Dorsolateral prefrontal cortex (tissue), 120 donors: ENCODE measurements at regions of chr1 and their contacts with region 1.

Region 1: GRCh38 chr1:9292361-9293240 is at the start of gene SPSB1:
- DNase-seq: peak; percentile 19 to 81 (median 64)
- H3K4me3 ChIP-seq: peak within 1 kb of the TSS; percentile 63 to 95 (median 86)
- H3K27ac ChIP-seq: peak within 1 kb of the TSS; percentile 54 to 95 (median 88)
- H3K27me3 ChIP-seq: no peaks in the 10 kb centered on the region
- CTCF ChIP-seq: peak in 8 of 56 donors; percentile 6 to 48 (median 22)
- total RNA-seq, gene SPSB1: 4.7 to 43.4 (median 12.2) TPM

Region 2: GRCh38 chr1:9302745-9303524 is 10.3 kb after region 1 on chr1:
- intact Hi-C with region 1: no loop called
- DNase-seq: no peak
- H3K4me3 ChIP-seq: no peak overlapping the region
- H3K27ac ChIP-seq: peak overlapping the region in 3 of 59 donors; percentile 0 to 25 (median 24)
- H3K27me3 ChIP-seq: no peaks in the 10 kb centered on the region
- CTCF ChIP-seq: no peak

Region 3: GRCh38 chr1:9362488-9362887 is 69.9 kb after region 1 on chr1:
- intact Hi-C with region 1: loop called in 1 of 2 experiments (anchors 5 kb)
- DNase-seq: peak in 2 of 10 donors; percentile 25 to 45
- H3K4me3 ChIP-seq: peak overlapping the region in 6 of 59 donors; percentile 4 to 17 (median 10)
- H3K27ac ChIP-seq: peak overlapping the region in 57 of 59 donors; percentile 15 to 93 (median 82)
- H3K27me3 ChIP-seq: no peaks in the 10 kb centered on the region
- CTCF ChIP-seq: no peak

Region 4: GRCh38 chr1:9375912-9376311 is 83.3 kb after region 1 on chr1:
- intact Hi-C with region 1: loop called in 1 of 2 experiments (anchors 2 kb)
- DNase-seq: no peak
- H3K4me3 ChIP-seq: no peak overlapping the region
- H3K27ac ChIP-seq: peak overlapping the region in 53 of 59 donors; percentile 4 to 86 (median 63)
- H3K27me3 ChIP-seq: no peaks in the 10 kb centered on the region
- CTCF ChIP-seq: no peak

Region 5: DNA sequence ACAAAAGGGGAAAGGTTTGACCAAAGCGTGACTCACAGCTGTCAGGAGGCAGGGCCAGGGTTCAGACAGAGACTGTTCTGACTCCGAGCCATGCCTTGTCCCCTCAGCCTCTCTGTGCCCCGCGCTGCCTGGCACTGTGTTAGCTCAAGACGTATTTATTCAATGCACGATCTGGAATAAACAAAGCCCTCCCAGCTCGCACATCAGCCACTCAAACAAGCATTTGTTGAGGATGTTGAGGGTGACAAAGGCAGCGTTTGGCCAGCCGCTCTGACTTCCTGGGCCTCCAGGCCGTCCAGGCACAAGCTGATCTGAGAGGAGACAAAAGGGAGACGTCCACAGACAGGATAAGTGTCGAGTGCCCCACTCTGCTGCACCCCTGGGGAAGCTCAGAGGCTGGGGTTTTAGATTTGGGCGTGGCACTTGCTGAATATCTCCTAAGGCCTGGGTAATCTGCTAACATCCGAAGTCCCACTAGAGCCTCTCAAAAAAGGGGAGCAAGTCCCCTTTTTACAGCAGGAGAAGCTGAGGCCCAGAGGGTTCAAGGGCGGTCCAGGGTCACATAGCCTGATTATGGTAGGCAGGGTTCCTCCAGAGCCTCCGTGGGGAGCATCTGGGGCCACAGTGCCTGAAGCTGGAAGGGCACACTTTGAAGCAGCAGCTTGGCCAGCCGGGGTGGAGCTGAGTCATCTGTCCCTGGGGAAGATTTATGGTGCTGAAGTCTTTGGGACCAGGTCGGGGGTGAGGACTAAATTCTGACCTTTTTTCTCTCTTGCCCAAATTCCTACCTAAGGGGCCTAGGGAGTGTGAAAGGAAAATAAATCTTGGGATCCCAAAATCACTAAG is 96.0 kb after region 1 on chr1:
- intact Hi-C with region 1: loop called in 1 of 2 experiments (anchors 5 kb)
- DNase-seq: peak; percentile 28 to 96 (median 92)
- H3K4me3 ChIP-seq: peak overlapping the region in 6 of 59 donors; percentile 2 to 43 (median 10)
- H3K27ac ChIP-seq: peak overlapping the region; percentile 29 to 100 (median 97)
- H3K27me3 ChIP-seq: no peaks in the 10 kb centered on the region
- CTCF ChIP-seq: peak in 5 of 56 donors; percentile 7 to 32 (median 15)

Region 6: GRCh38 chr1:9455487-9456234 is 163.1 kb after region 1 on chr1:
- intact Hi-C with region 1: loop called (anchors 1 to 5 kb)
- DNase-seq: peak; percentile 17 to 79 (median 66)
- H3K4me3 ChIP-seq: no peak overlapping the region
- H3K27ac ChIP-seq: peak overlapping the region in 1 of 59 donors; percentile 24
- H3K27me3 ChIP-seq: no peaks in the 10 kb centered on the region
- CTCF ChIP-seq: peak; percentile 35 to 97 (median 85)